Activated naive CD4-positive, alpha-beta T cell treated with anti-CD3 and anti-CD28 coated beads for 36 hours (primary cell): ENCODE measurements at regions of chr6 and their contacts with region 1.

Region 1: DNA sequence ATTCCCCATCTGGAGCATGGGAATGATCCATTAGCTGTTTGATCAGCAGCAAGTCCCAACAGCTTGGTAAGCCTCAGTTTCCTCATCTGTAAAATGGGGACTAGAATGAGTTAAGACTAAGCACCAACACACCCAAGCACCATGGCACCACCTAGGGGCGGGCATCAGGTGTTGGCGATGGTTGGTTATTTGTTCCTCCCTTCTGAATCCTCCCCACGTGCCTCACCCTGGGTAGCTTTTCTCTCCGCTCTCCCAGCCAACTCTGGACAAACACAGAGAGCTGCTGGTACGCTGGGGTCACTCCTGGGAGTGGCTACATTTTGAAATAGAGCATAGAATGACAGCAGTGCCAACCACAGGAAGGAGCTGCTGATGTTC is 13.3 kb upstream of the ITPR3 start:
- DNase-seq: peak; percentile 70
- H3K4me3 Mint-ChIP-seq: no peak overlapping the region
- H3K27ac Mint-ChIP-seq: no peak overlapping the region
- H3K4me1 Mint-ChIP-seq: no peaks in the 10 kb centered on the region
- H3K27me3 Mint-ChIP-seq: no peaks in the 10 kb centered on the region

Region 2: DNA sequence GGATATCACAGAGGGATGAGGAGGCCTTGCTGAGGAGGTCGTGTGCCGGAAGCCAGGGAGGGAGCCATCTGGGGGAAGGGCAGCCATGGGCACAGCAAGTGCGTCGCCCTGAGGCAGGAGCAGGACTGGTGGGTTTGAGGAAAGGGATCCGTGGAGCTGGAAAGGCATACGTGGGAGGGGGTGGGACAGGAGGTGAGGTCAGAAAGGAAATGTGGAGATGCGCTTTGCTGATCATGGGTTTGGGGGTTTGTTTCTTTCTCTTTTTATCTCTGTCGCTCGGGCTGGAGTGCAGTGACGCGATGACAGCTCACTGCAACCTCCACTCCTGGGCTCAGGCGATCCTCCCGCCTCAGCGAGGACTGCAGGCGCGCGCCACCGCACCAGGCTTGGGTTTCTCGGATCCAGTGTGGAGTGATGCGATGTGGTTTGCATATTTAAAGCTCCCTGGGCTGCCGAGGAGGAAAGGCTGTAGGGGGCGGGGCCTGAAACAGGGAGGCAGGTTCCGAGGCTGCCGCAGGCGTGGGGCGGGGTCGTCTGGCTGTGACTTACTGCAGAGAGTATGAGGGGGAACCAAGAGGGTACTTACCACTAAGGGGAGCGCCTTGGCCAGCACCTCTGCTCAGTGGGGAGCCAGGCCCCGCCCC is 15.2 kb before region 1 on chr6:
- CTCF ChIA-PET with region 1: interaction called, 46 read pairs
- intact Hi-C with region 1: loop called (anchors 1 kb)
- DNase-seq: peak; percentile 61
- H3K4me3 Mint-ChIP-seq: peak overlapping the region; percentile 62
- H3K27ac Mint-ChIP-seq: peak overlapping the region; percentile 19
- H3K4me1 Mint-ChIP-seq: peaks cover 42% of the 10 kb centered on the region
- H3K27me3 Mint-ChIP-seq: no peaks in the 10 kb centered on the region

Region 3: DNA sequence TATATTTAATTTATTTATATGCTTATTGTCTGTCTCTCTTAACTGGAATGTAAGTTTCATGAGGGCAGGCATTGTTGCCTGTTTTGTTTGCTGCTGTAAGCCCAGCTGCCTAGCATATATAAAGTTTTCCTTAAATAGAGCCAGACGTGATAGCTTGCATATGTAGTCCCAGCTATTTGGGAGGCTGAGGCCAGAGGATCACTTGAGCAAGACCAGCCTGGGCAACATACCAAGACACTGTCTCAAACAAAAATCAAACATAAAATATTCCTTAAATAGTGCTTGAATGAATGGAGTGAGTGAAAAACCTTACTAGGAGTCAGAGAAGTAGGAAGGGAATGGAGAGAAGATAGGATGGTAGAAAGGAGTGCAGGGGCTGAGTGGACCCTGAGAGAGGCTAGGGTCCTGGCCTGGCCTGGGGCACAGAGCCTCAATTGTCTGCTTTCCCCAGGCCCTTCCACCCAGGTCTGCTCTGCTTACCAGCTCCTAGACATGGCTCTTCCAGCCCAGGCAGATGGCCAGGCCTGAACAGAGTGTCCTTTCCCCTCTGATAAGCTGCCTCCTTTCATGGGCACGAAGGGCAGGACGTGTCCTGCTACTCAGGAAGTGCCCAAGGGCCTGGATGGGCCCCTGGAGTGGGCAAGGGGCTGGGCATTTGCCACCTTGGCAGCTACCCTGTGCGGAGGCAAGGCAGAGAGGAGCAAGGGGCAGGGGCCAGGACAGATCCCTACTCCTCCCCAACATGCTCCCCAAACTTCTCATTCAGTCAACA is 10.0 kb before region 1 on chr6:
- CTCF ChIA-PET with region 1: interaction called, 15 read pairs
- intact Hi-C with region 1: no loop called
- DNase-seq: no peak
- H3K4me3 Mint-ChIP-seq: no peak overlapping the region
- H3K27ac Mint-ChIP-seq: no peak overlapping the region
- H3K4me1 Mint-ChIP-seq: peaks cover 36% of the 10 kb centered on the region
- H3K27me3 Mint-ChIP-seq: no peaks in the 10 kb centered on the region

Region 4: DNA sequence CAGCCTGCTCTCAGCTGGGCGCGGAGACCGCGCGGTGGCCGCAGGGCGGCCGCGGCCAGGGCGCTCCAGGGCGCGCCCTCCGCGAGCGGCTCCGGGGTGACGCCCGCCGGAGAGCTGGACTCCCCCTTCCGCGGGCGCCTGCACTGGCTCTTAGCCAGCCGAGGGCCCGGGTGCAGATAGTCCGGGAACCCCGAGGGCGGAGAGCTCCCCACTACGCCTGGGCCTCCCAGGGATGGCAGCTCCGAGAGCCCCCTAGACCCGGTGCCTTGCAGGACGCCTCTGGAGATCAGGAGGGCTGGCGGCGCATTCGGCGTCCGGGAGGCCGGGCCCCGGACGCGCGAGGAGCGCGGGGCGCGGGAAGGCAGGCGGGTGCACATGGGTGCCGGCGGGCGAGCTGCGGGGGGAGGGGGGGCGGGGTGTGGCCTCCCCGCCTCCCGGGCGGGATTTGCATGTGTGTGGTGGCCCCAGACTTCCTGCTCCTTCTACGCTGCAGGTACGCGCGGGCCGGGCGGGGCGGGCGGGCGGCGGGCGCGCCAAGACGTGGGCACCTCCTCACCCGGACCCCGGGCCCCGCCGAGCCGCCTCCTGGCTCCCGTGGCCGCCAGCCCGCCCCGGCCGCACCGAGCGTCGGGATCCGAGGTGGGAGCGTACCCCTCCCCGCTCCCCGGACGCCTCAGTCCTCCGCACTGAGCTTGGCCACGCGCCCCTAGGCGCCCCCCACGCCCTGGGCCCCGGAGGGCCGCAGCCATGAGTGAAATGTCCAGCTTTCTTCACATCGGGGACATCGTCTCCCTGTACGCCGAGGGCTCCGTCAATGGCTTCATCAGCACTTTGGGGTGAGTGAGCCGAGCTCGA is 13.3 kb after region 1 on chr6 and contains the start of gene ITPR3:
- CTCF ChIA-PET with region 1: interaction called, 18 read pairs
- intact Hi-C with region 1: no loop called
- DNase-seq: peak; percentile 77
- H3K4me3 Mint-ChIP-seq: peak within 1 kb of the TSS; percentile 89
- H3K27ac Mint-ChIP-seq: peak within 1 kb of the TSS; percentile 78
- H3K4me1 Mint-ChIP-seq: peaks cover 53% of the 10 kb centered on the region
- H3K27me3 Mint-ChIP-seq: no peaks in the 10 kb centered on the region
- total RNA-seq, gene ITPR3: 34.8 to 35.1 TPM